HepG2 (cell line): ENCODE measurements at regions of chrX and their contacts with region 1.

Region 1: DNA sequence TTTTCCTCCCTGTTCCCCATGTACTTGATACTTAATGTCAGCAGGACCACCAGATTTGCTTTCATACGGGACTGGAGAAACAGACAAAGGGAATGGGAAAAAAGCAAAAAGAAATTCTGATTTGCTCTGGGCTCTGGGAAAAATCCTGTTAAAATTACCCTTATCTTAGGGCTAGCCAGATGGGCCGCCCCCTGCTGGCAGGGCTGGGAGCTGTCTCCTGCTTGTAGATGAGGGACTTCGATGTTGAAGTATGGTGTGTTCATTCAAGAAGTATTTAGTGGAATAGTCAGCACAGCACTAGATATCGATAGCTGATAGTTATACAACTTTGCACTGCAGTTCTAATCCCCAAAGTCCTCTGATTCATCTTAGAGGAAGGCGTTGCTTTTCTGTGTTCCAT is 45.8 kb downstream of the BCORL1 start:
- DNase-seq: no peak
- ATAC-seq: peak; percentile 56; the same call in 1 of the 3 replicates
- H3K4me3 ChIP-seq: no peak overlapping the region
- H3K27ac ChIP-seq: no peak overlapping the region
- H3K4me1 ChIP-seq: no peaks in the 10 kb centered on the region
- H3K27me3 ChIP-seq: no peaks in the 10 kb centered on the region
- CTCF ChIP-seq: peak; percentile 59
- EP300 ChIP-seq: no peak
- POLR2A ChIP-seq: no peak
- RAD21 ChIP-seq: no peak

Region 2: DNA sequence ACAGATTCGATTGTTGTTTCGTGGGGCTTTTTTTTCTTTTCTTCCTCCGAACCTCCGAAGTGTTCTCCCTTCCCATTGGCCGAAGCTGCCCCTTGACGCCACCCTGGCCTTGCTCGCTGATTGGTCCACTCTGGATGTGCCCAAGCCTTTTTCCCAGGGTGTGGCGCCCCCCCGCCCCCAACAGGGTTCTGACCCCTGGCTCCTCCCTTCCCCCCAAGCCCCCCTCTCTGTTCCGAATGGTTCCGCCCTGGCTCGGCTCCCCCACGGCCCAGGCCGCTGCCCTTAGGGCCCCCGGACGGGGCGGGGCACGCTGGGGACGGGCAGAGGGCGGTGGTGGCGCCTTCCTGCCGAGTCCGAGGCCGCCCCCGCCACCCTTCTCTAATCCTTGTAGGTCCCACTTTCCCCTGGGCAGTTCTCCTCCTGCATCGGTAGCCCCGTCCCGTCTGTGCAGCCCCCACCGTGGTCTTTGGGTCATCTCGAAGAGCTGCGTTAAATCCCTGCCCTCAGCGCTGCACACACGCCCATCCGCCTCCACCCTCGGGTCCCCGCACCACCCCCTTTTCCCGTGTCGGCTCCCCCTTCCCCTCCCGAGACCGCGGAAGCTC is 96.7 kb before region 1 on chrX:
- CTCF ChIA-PET with region 1: no interaction called
- POLR2A ChIA-PET with region 1: no interaction called
- in situ Hi-C with region 1: no loop called
- intact Hi-C with region 1: loop called (anchors 1 kb)
- DNase-seq: peak; percentile 62
- ATAC-seq: peak; percentile 76
- H3K4me3 ChIP-seq: peak overlapping the region; percentile 34 to 65 (median 57); a peak in 4 of 6 replicates
- H3K27ac ChIP-seq: peak overlapping the region; percentile 64
- H3K4me1 ChIP-seq: 0 out of 2 replicates have a peak, but pooled peaks cover 5% of the 10 kb centered on the region
- H3K27me3 ChIP-seq: peaks cover 0 to 9% of the 10 kb centered on the region in 2 experiments; a peak in 3 of 5 replicates
- CTCF ChIP-seq: peak; percentile 17; the same call in 1 of the 2 replicates
- EP300 ChIP-seq: no peak
- POLR2A ChIP-seq: peak in 1 of 2 experiments; percentile 34; a peak in 1 of 4 replicates
- RAD21 ChIP-seq: no peak

Region 3: DNA sequence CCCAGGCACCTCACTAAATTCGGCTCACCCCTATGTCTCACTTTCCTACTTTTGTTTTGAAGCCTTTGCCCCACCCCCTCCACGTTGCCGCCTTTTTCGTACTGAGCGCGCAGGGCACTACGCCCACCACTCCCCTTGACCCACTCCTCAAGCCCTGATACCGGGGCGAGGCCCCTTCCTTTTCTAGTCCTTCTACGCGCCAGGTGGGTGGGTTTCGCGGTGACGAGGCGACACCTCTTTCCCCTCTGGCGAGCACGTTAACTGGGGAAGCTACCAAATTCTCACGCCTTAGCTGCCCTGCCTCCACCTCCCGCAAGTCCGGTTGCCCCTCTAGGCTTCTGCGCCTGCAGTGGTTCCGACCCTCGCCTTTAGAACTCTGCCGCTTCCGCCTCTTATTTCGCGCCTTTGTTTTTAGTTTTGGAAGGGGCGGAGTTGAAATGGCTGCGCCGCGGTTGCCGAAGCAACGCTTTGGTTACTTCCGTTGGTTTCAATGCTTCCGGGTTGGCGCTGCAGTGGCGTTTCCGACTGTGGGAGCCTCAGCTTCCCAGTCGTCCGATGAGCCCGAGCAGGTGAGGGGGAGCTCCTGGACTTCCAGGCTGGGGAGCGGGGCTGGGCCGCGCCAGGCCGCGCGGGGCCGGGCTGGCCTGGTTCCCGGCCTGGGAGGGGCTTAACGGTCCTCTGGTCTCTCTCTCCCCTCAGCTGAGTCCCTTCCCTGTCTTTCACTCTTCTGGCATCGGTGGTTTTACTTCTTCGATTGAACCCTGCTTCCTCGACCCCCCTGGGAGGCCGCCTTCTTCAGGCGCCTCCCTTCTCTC is 311.4 kb after region 1 on chrX and contains the start of gene SLC25A14:
- CTCF ChIA-PET with region 1: no interaction called
- POLR2A ChIA-PET with region 1: no interaction called
- in situ Hi-C with region 1: no loop called
- intact Hi-C with region 1: no loop called
- DNase-seq: peak; percentile 76
- ATAC-seq: peak; percentile 99
- H3K4me3 ChIP-seq: peak within 1 kb of the TSS; percentile 71 to 79 (median 78)
- H3K27ac ChIP-seq: peak within 1 kb of the TSS; percentile 70
- H3K4me1 ChIP-seq: peaks cover 7% of the 10 kb centered on the region
- H3K27me3 ChIP-seq: no peaks in the 10 kb centered on the region
- CTCF ChIP-seq: peak; percentile 8; the same call in 1 of the 2 replicates
- EP300 ChIP-seq: no peak
- POLR2A ChIP-seq: peak in 1 of 2 experiments; percentile 65; a peak in 3 of 4 replicates
- RAD21 ChIP-seq: no peak
- total RNA-seq, gene SLC25A14: 7.4 and 14.0 TPM in 2 replicates

Region 4: DNA sequence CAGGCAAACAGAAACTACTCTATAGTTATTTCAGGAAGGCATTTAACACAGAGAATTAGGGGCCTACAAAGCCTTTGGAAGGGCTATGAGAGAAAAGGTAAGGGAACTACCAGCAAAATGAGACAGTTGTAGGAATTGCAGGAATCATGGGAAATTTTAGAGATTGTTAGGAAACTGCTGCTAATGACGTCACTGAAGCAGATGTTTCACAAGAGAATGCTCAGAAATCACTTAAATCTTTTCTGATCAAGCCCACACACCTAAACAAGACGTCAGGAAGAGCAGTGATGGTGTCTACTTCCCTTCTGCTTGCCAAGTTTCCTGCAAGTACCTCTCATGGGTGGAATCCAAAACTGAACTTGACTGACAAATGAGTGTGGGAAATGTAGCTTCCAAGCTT is 1520.8 kb after region 1 on chrX:
- CTCF ChIA-PET with region 1: no interaction called
- POLR2A ChIA-PET with region 1: no interaction called
- in situ Hi-C with region 1: no loop called
- intact Hi-C with region 1: no loop called
- DNase-seq: no peak
- ATAC-seq: no peak
- H3K4me3 ChIP-seq: no peak overlapping the region
- H3K27ac ChIP-seq: no peak overlapping the region
- H3K4me1 ChIP-seq: no peaks in the 10 kb centered on the region
- H3K27me3 ChIP-seq: no peaks in the 10 kb centered on the region
- CTCF ChIP-seq: no peak
- EP300 ChIP-seq: no peak
- POLR2A ChIP-seq: no peak
- RAD21 ChIP-seq: no peak